ENCODE measurements at regions of chr3 and their contacts with region 1.

Region 1: DNA sequence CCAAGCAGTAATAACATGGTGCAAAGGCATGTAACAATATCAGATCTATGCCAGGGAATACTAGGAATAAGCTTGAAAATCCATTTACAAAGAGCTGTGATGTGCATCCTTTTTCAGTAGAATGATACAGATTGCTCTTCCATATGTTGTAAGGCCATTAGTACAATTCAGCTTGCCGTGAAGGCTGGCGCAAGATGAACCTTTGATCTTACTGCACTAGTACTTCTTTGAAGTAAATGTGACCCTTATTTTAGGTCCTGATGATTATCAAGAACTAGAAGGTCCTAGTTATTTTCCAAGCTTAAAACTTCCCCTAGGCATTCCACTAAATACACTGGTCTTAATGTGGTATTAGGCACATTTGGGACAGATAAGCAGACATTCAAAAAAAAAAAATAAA is 210.1 kb upstream of the CD96 start:
- DNase-seq: no peak
- ATAC-seq: no peak
- H3K4me3 ChIP-seq: no peak overlapping the region
- H3K4me3 Mint-ChIP-seq: no peak overlapping the region
- H3K27ac ChIP-seq: no peak overlapping the region
- H3K27ac Mint-ChIP-seq: no peak overlapping the region
- H3K4me1 ChIP-seq: no peaks in the 10 kb centered on the region
- H3K4me1 Mint-ChIP-seq: peaks cover 6% of the 10 kb centered on the region
- H3K27me3 ChIP-seq: no peaks in the 10 kb centered on the region
- H3K27me3 Mint-ChIP-seq: no peaks in the 10 kb centered on the region
- CTCF ChIP-seq: no peak

Region 2: DNA sequence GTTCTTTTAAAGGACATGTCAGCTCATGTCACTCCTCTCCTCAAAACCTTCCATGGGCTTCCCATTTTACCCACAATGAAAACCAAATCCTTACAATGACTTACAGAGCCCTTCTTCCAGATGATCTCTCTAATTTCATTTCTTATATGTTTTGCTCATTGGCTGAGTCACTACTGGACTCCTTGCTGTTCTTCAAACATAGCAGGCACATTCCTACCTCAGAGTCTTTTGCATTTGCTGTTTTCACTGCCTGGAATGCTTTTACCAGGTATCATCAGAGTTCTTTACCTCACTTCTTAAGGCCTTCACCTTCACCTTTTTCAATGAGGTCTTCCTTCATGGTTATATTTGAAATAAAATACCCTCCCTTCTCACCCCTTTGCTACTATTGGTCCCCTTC is 203.0 kb before region 1 on chr3:
- CTCF ChIA-PET with region 1: no interaction called
- POLR2A ChIA-PET with region 1: no interaction called
- intact Hi-C with region 1: no loop called
- DNase-seq: no peak
- ATAC-seq: no peak
- H3K4me3 ChIP-seq: no peak overlapping the region
- H3K4me3 Mint-ChIP-seq: no peak overlapping the region
- H3K27ac ChIP-seq: no peak overlapping the region
- H3K27ac Mint-ChIP-seq: no peak overlapping the region
- H3K4me1 ChIP-seq: no peaks in the 10 kb centered on the region
- H3K4me1 Mint-ChIP-seq: no peaks in the 10 kb centered on the region
- H3K27me3 ChIP-seq: no peaks in the 10 kb centered on the region
- H3K27me3 Mint-ChIP-seq: no peaks in the 10 kb centered on the region
- CTCF ChIP-seq: no peak

Region 3: GRCh38 chr3:111285694-111286093 is 46.2 kb before region 1 on chr3:
- CTCF ChIA-PET with region 1: no interaction called
- POLR2A ChIA-PET with region 1: no interaction called
- intact Hi-C with region 1: loop called in 1 of 2 experiments (anchors 2 kb)
- DNase-seq: no peak
- ATAC-seq: no peak
- H3K4me3 ChIP-seq: no peak overlapping the region
- H3K4me3 Mint-ChIP-seq: no peak overlapping the region
- H3K27ac ChIP-seq: no peak overlapping the region
- H3K27ac Mint-ChIP-seq: no peak overlapping the region
- H3K4me1 ChIP-seq: peaks cover 5% of the 10 kb centered on the region
- H3K4me1 Mint-ChIP-seq: peaks cover 19% of the 10 kb centered on the region
- H3K27me3 ChIP-seq: no peaks in the 10 kb centered on the region
- H3K27me3 Mint-ChIP-seq: no peaks in the 10 kb centered on the region
- CTCF ChIP-seq: no peak

Measured in CD8-positive, alpha-beta T cell (primary cell).